Activated T-helper 1 cell treated with anti-CD3 and anti-CD28 coated beads, Interleukin-12 subunit alpha, Interleukin-12 subunit beta, Interleukin-2, Interleukin-4 antibody, amounts not matched to agents 30 ng/mL and 10 ng/mL and 1 ng/mL, durations not matched to agents 14 hours and 24 hours and 36 hours (primary cell): ENCODE measurements at regions of chr6 and their contacts with region 1.

Region 1: GRCh38 chr6:104955927-104956730 is 778 bp upstream of the LIN28B start:
- DNase-seq: no peak
- H3K4me3 Mint-ChIP-seq: no peak overlapping the region
- H3K27ac Mint-ChIP-seq: no peak overlapping the region
- H3K4me1 Mint-ChIP-seq: peaks cover 26% of the 10 kb centered on the region
- H3K27me3 Mint-ChIP-seq: peaks cover 75% of the 10 kb centered on the region

Region 2: DNA sequence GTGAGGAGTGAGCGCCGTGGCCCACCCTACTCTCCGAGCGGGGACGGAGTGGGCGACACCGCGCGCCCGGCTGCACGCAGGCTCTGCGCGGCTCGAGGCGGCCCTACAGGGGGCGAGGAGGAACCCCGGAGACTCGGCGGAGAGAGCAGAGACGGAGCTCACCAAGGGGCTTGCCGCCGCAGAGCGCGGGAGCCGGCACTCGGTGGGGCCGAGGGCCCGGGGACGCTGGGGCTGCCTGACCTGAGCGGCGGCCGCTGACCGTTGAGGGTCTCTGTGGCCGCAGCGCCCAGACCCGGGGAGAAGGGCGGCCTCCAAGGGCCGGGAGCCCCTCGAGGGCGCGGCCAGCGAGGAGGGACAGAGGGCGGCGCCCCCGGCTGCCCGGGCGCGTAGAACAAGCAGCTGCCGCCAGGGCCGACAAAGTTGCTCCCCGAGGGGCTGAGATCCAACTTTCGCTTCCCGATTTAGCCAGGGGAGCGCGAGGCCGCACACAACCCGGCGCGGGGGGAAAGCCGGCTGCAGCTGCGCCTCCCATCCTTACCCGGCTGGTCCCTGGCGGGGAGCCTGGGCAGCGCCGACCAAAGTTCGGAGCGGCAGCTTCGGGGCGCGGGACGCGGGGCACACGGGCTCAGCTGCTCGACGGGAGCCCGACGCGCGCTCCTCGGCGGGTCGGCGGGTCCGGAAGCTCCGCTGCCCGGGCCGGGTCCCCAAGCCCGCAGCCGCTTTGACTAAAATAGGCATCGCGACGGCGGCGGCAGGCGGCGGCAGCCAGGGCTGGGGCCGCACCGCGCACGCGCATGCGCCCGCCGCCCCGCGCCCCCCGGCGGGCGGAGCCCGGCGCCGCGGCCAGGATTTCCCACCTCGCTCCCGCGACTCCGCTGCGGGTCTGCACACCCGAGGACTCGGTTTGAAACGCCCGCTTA is 180.6 kb after region 1 on chr6:
- intact Hi-C with region 1: loop called (anchors 5 kb)
- DNase-seq: peak; percentile 3
- H3K4me3 Mint-ChIP-seq: peak overlapping the region; percentile 48
- H3K27ac Mint-ChIP-seq: no peak overlapping the region
- H3K4me1 Mint-ChIP-seq: peaks cover 5% of the 10 kb centered on the region
- H3K27me3 Mint-ChIP-seq: peaks cover 69% of the 10 kb centered on the region